Esophagus muscularis mucosa (tissue), 4 donors: ENCODE measurements at regions of chr1 and their contacts with region 1.

Region 1: GRCh38 chr1:12596007-12596821 is 21.8 kb downstream of the DHRS3 start:
- DNase-seq: peak; percentile 97
- H3K4me3 ChIP-seq: peak overlapping the region; percentile 47 to 57 (median 50)
- H3K27ac ChIP-seq: peak overlapping the region; percentile 92 to 95 (median 94)
- H3K4me1 ChIP-seq: peaks cover 98 to 100% (median 100%) of the 10 kb centered on the region in 4 donors
- H3K27me3 ChIP-seq: no peaks in the 10 kb centered on the region
- CTCF ChIP-seq: no peak
- EP300 ChIP-seq: peak; percentile 85
- POLR2A ChIP-seq: peak; percentile 7

Region 2: DNA sequence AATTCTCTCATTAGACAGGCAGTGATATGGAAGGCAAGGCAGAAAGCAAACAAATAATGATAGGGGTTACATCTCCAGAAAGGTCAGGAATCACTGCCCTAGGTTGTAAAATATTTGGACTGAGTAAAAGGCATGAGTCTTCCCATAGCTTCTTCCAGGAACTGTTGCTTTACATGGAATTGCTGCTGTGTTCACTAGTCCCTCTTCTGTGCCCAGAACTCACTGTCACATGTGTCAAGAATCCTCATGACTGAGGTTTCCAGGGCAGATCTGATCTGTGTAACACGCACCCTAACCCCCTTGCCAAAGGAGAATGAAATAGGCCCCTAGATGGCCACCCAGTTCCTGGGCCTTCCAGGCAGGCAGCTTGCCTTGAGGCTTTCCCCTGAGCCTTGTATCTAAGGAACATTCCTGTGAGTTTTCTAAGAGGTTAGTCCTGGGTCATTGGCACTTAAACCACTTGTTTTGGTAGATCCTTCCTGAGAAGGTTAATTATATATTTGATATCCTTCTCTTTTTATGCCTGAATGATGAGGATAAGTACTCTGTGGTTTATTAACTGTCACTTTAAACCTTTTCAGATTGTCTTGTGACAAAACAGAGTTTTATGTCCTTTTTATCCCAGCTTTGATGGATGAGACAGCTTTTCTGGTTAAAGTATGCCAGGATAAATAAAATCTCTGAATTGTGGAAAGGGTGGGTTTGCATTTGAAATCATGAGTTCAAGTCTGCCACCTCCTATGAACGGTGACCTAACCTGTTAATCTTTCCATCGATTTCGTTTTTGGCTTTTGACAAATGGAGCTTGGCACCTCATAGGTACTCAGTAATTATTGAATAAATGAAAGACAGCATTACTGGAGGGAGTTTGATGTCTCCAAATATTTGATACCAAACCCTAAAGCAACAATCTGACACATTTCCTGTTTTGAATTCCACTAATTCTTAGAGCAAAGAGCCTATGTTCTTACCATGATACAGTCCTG is 141.5 kb before region 1 on chr1:
- intact Hi-C with region 1: loop called (anchors 5 kb)
- DNase-seq: peak; percentile 95
- H3K4me3 ChIP-seq: no peak overlapping the region
- H3K27ac ChIP-seq: peak overlapping the region; percentile 85 to 87 (median 86)
- H3K4me1 ChIP-seq: peaks cover 96 to 100% (median 100%) of the 10 kb centered on the region in 4 donors
- H3K27me3 ChIP-seq: no peaks in the 10 kb centered on the region
- CTCF ChIP-seq: peak in 2 of 3 experiments; percentile 6 to 17
- EP300 ChIP-seq: peak; percentile 79
- POLR2A ChIP-seq: no peak

Region 3: GRCh38 chr1:12539705-12540579 is 56.3 kb before region 1 on chr1:
- intact Hi-C with region 1: loop called (anchors 5 kb)
- DNase-seq: peak; percentile 97
- H3K4me3 ChIP-seq: peak overlapping the region; percentile 19 to 32 (median 26)
- H3K27ac ChIP-seq: peak overlapping the region; percentile 84 to 90 (median 88)
- H3K4me1 ChIP-seq: peaks cover 20 to 39% (median 38%) of the 10 kb centered on the region in 4 donors
- H3K27me3 ChIP-seq: no peaks in the 10 kb centered on the region
- CTCF ChIP-seq: peak in 2 of 3 experiments; percentile 23 to 37
- EP300 ChIP-seq: peak; percentile 92
- POLR2A ChIP-seq: no peak

Region 4: GRCh38 chr1:12556368-12556930 is 39.8 kb before region 1 on chr1:
- intact Hi-C with region 1: loop called (anchors 5 kb)
- DNase-seq: peak; percentile 95
- H3K4me3 ChIP-seq: no peak overlapping the region
- H3K27ac ChIP-seq: peak overlapping the region; percentile 93 to 96 (median 94)
- H3K4me1 ChIP-seq: peaks cover 42 to 79% (median 68%) of the 10 kb centered on the region in 4 donors
- H3K27me3 ChIP-seq: no peaks in the 10 kb centered on the region
- CTCF ChIP-seq: no peak
- EP300 ChIP-seq: peak; percentile 82
- POLR2A ChIP-seq: no peak

Region 5: DNA sequence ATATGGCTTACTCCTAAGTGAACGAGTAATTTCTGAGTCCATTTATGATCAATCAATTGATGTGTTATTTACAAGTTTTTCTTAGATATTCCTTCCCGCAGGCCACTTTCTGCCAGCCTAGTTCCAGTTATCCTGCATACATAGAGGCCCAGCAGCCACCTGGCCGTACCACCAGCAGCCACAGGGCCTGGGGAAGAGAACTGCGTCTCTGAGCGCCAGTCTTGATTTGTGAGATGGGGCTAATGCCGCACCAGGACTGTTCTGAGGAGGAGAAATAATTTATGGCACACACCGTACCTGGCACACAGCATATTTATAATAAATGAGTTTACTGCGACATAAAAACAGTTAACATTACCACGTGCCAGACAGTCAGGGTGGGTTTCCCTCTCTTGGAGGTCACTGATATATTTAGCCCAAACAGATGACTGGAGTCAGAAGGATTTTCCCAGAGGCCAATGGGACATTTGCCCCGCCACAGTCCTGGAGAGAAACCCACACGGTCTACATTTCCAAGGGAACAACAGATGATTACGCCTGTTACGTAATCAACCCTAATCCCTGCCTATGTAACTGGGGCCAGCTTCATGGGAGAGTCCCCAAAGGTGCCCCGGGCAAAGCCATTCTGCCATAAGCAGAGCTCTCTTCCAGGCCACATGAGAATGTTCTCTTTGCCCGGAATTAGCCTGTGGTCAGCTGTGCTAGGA is 16.3 kb before region 1 on chr1:
- intact Hi-C with region 1: no loop called
- DNase-seq: no peak
- H3K4me3 ChIP-seq: no peak overlapping the region
- H3K27ac ChIP-seq: peak overlapping the region; percentile 33 to 60 (median 48)
- H3K4me1 ChIP-seq: peaks cover 10 to 38% (median 30%) of the 10 kb centered on the region in 4 donors
- H3K27me3 ChIP-seq: no peaks in the 10 kb centered on the region
- CTCF ChIP-seq: no peak
- EP300 ChIP-seq: no peak
- POLR2A ChIP-seq: no peak

Region 6: DNA sequence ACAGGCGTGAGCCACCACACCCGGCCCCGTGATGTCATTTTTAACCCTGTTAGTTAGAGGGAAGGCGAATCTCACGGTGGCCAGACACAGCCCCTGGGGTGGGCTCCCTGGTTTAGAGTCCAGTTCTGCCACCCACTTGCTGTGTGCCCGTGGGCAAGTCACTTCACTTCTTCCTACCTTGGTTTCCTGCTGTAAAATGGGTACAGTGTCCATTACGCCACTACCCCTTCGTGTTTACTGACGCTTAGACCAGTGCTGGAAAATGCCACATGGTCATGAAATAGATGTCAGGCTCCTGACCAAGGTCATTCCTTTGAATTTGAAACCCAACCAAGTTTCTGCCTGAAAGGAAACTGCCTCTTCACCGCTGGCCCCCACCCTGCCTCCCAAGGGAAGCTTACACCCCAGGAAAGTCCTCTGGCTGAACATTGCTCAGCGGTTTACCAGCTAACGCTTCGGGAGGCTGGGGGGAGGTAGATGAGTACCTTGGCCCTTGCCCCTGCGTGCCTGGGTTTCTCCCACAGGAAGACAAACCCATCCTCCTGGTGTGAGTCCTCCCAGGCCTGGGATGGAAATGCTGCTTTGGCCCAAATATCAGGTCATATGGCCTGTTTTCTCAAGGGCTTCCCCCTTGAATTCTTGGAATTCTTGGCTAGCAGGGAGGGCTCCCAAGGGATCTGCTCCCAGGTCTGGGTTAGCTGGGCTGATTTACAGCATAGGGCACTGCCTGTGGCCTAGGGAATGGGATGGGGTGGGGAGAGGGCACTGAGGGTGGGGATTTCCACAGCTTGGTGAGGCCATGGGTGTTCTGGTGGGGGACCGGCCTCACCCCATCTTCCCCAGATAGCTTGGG is 40.1 kb after region 1 on chr1:
- intact Hi-C with region 1: no loop called
- DNase-seq: no peak
- H3K4me3 ChIP-seq: no peak overlapping the region
- H3K27ac ChIP-seq: peak overlapping the region in 1 of 4 donors; percentile 42
- H3K4me1 ChIP-seq: peaks cover 0 to 18% (median 12%) of the 10 kb centered on the region in 4 donors
- H3K27me3 ChIP-seq: peaks cover 0 to 7% (median 0%) of the 10 kb centered on the region in 4 donors
- CTCF ChIP-seq: no peak
- EP300 ChIP-seq: no peak
- POLR2A ChIP-seq: no peak